Testis (tissue), 5 donors: ENCODE measurements at regions of chr10 and their contacts with region 1.

Region 1: GRCh38 chr10:60816628-60817397 is 38.5 kb downstream of the CDK1 start:
- DNase-seq: peak; percentile 74
- H3K4me3 ChIP-seq: no peak overlapping the region
- H3K27ac ChIP-seq: peak overlapping the region; percentile 9 to 50
- H3K4me1 ChIP-seq: peaks cover 2% of the 10 kb centered on the region
- H3K27me3 ChIP-seq: peaks cover 5% of the 10 kb centered on the region
- CTCF ChIP-seq: peak; percentile 70 to 86 (median 79)
- POLR2A ChIP-seq: no peak

Region 2: DNA sequence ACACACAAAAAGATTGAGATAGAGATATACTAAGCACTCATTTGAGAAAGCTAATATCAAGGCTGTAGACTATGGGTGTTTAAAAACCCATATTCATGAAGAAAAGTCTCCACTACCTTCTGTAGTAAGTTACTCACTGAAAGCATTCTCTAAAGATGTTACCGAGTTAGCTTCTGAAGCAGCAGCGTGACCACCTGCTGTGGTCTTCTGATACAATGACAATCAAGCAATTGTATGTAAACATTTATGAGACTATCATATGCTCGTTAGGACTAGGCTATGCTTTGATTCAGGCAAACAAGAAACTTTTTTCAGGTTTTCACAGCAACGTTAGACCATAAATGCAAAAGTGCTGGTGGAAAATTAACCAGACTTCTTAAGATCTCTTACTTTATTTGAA is 115.9 kb after region 1 on chr10:
- intact Hi-C with region 1: no loop called
- DNase-seq: no peak
- H3K4me3 ChIP-seq: no peak overlapping the region
- H3K27ac ChIP-seq: no peak overlapping the region
- H3K4me1 ChIP-seq: peaks cover 15% of the 10 kb centered on the region
- H3K27me3 ChIP-seq: no peaks in the 10 kb centered on the region
- CTCF ChIP-seq: no peak
- POLR2A ChIP-seq: no peak

Region 3: GRCh38 chr10:60944159-60944909 is 127.5 kb after region 1 on chr10 and contains the start of gene RHOBTB1:
- intact Hi-C with region 1: loop called (anchors 10 kb)
- DNase-seq: peak; percentile 81
- H3K4me3 ChIP-seq: peak within 1 kb of the TSS; percentile 80 to 91
- H3K27ac ChIP-seq: peak within 1 kb of the TSS; percentile 89 to 97
- H3K4me1 ChIP-seq: peaks cover 10% of the 10 kb centered on the region
- H3K27me3 ChIP-seq: no peaks in the 10 kb centered on the region
- CTCF ChIP-seq: peak in 1 of 3 experiments; percentile 5
- POLR2A ChIP-seq: no peak
- total RNA-seq, gene RHOBTB1: 44.7 to 47.1 TPM

Region 4: DNA sequence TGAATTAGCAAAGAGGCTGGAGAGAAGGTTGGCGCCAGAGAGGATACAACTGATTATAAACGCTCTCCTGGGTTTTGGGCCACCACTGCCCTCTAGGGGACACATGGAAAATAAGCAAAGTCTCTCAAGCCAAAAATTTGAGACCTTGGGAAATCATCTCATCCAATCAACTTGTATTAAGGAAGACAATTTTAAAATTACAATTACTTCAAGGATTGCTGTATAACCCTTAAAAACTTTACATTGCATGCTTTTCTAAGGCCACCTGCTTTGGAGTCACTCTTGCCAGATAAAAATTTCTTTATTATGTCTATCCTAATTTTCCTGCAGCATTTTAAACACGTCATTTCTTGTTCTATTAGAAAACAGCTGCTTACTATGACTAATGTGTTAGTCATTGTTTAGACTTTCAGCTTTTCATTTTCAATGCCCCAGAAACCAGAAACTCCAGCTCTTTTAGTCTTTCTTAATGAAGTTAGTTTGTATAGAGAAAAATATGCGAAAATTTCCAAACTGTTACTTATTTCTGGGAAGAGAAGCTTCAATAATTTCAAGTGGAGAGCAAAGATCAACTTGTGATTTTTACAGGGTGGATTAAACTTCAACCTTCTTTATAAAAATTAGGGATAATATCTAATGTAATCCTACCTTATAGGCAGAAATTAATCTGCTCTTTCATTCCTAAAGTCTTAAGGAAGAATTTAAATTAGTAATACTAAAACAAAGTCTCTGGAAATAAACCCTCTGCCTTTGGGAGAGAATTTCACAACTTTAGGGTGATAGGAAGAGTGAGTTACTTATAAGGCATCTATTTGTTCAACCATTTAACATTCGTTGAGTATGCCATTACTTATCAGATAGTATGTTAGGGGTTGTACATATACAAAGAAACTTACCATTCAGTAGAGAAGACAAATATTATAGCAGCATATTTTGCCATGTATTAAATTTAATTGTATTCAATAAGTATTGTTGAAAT is 147.7 kb after region 1 on chr10:
- intact Hi-C with region 1: loop called (anchors 5 kb)
- DNase-seq: peak; percentile 79
- H3K4me3 ChIP-seq: no peak overlapping the region
- H3K27ac ChIP-seq: peak overlapping the region in 1 of 2 donors; percentile 60
- H3K4me1 ChIP-seq: peaks cover 5% of the 10 kb centered on the region
- H3K27me3 ChIP-seq: no peaks in the 10 kb centered on the region
- CTCF ChIP-seq: peak; percentile 69 to 82 (median 73)
- POLR2A ChIP-seq: no peak